ENCODE measurements at regions of chr3 and their contacts with region 1.

Region 1: DNA sequence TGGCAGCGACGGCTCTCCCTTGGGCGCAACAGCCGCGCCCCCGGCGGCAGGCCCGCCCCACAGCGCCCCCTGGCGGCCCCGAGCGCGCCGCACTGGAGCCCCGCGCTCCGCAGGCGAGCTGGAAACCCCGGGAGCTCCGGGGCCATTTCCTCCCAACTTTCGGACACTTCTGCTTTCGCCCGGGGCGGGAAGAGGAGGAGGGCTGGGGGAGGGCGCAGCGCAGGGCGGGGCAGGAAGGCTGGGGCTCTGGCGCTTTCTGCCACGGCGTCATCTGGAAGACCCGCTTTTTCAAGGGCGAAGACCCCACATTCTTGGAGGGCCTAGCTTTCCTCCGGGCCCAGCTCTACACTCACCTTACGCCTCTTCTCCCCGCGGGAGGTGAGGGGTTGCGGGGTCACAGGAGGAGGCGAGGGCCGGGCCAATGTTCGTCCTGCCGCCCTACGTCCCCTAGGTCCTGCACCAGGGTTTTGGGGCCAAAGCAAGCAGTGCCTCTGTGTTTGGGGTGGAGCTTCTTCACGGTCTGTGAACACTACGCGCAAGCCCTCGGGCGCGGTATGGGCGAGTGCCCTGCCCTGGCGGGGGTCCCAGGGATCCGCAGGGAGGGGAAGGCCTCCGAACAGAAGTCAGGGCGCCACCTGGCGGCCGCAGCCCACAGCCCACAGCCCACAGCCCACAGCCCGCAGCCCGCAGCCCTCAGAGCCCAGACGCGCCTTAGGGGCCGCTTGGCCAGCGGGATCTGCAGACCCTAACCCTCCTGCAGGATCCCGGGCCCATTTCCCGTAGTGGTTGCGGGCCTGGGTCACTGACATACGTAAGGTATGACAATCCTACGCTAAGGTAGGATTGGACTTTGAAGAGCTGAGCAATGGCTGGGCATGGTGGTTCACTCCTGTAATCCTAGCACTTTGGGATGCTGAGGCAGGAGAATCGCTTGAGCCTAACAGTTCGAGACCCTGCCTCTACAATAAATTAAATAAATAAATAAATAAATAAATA is 31.1 kb downstream of the FOXL2 start:
- DNase-seq: peak; percentile 68 to 90 (median 75)
- ATAC-seq: peak; percentile 87
- H3K4me3 ChIP-seq: peak overlapping the region; percentile 82
- H3K4me3 Mint-ChIP-seq: peak overlapping the region; percentile 87
- H3K27ac ChIP-seq: no peak overlapping the region
- H3K27ac Mint-ChIP-seq: peak overlapping the region; percentile 47
- H3K4me1 ChIP-seq: peaks cover 18% of the 10 kb centered on the region
- H3K4me1 Mint-ChIP-seq: no peaks in the 10 kb centered on the region
- H3K27me3 ChIP-seq: peaks cover 0 to 4% of the 10 kb centered on the region in 2 experiments
- H3K27me3 Mint-ChIP-seq: peaks cover 5% of the 10 kb centered on the region
- CTCF ChIP-seq: peak; percentile 85

Region 2: DNA sequence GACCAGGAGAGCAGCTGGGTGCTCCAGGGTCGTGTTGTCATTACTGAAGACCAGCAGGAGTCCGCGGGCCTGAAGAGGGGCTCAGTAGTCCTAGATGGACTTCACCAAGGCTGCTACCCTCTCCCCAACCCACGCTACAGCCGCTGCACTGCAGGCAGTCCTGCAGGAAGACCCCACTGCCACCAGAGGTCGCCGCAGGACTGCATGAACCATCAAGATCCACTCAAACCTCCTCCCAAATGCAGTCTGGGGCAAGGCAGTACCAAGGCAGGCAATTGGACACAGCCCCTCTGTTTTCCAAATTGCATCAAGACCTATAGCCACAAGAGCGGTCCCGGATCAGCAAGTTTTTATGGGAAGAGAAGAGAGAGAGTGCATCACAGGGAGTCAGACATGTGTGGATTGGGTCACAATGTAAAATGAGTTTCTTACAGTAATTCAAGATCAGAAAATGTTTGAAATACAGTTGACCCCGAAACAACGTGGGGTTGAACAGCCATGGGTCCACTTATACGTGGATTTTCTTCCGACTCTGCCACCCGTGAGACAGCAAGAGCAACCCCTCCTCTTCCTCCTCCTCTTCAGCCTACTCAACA is 847.1 kb before region 1 on chr3:
- CTCF ChIA-PET with region 1: no interaction called
- POLR2A ChIA-PET with region 1: no interaction called
- intact Hi-C with region 1: loop called (anchors 2 to 5 kb)
- DNase-seq: peak; percentile 53 to 82 (median 64)
- ATAC-seq: peak; percentile 77
- H3K4me3 ChIP-seq: no peak overlapping the region
- H3K4me3 Mint-ChIP-seq: no peak overlapping the region
- H3K27ac ChIP-seq: no peak overlapping the region
- H3K27ac Mint-ChIP-seq: no peak overlapping the region
- H3K4me1 ChIP-seq: no peaks in the 10 kb centered on the region
- H3K4me1 Mint-ChIP-seq: no peaks in the 10 kb centered on the region
- H3K27me3 ChIP-seq: no peaks in the 10 kb centered on the region
- H3K27me3 Mint-ChIP-seq: peaks cover 12% of the 10 kb centered on the region
- CTCF ChIP-seq: peak; percentile 79

Region 3: DNA sequence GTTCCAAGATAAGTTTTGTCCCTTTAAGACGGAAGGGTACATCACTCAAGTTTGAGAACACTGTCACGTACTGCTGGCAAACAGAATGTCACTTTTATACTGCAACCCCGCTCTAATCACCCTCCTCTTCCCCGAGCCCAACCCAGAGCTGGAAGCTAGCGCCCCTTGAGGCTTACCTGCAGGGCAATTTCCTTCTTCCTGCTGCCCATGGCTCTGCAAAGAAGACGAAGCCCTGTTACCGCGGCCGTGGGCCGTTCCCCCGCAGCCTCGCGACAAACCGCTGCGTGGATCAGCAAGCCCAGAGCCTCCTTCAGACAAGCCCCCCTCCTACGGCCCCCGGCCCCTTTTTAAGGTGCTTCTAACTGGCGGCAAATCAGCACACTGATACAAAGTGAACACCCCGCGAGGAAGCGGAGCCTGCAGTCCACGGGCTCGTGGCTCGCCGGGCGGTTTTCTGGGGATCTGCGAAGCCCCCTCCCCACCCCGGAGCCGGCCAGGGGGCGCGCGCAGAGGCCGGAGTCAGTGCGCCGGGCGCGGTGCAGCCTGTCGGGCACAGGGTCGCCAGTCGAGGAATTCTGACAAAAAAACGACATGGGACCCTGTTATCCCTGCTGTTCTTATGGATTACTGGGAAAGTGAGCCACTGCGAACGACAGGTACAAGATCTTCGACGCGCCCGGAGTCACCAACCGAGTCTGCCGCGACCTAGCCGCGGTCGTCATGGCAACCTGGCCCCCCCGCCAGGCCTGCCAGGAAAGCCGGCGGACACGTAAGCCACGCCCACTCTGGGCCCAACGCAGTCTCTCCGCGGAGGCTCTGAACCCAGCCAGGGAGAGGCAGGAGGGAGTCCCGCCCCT is 586.4 kb before region 1 on chr3 and contains the start of gene NME9:
- CTCF ChIA-PET with region 1: interaction called, 3 read pairs
- POLR2A ChIA-PET with region 1: no interaction called
- intact Hi-C with region 1: loop called (anchors 5 to 10 kb)
- DNase-seq: peak; percentile 80 to 97 (median 90)
- ATAC-seq: peak; percentile 85
- H3K4me3 ChIP-seq: peak within 1 kb of the TSS; percentile 69
- H3K4me3 Mint-ChIP-seq: peak within 1 kb of the TSS; percentile 98
- H3K27ac ChIP-seq: peak within 1 kb of the TSS; percentile 49 to 81
- H3K27ac Mint-ChIP-seq: peak within 1 kb of the TSS; percentile 88
- H3K4me1 ChIP-seq: peaks cover 20% of the 10 kb centered on the region
- H3K4me1 Mint-ChIP-seq: peaks cover 37% of the 10 kb centered on the region
- H3K27me3 ChIP-seq: no peaks in the 10 kb centered on the region
- H3K27me3 Mint-ChIP-seq: no peaks in the 10 kb centered on the region
- CTCF ChIP-seq: peak; percentile 71
- total RNA-seq, gene NME9: 0.80 TPM in 1 of 2 experiments, not detected in the other

Region 4: DNA sequence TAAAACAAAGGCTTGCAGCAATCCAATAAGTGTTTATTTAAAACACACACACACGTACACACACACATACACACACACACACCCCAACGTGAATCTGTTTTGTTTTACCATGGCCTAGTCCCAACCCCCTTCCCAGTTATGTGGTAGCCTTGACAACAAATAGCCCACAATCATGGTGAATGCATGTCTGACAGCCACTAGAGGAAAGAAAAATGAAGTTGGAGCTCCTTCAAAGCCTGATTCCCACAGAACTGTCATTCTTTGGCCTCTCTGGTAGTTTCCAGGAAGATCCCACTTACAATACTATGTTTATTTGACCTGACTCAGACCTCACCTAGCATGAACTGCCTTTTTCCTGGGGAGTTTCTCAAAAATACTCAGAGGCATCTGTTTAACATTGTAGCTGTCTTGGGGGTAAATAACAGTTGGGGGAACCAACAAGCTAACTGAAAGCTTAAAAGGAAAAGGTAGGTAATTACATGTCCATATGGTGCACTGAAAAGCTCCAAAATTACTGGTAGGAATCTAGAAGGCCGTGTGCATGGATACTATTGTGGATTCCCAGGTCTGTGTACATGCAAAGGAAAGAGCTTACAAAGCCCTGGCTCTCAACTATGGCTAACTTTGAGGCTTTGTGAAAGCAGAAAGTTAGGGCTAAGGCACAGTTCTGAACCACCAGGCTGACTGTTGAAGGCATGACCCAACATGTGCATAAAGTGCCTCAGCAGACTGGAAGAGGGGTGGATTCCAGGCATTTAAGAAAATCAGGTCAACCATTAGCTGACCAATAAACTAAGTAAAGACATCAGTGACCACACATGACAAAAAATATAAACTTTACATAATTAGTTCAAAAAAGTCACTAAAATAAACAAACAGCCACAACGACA is 241.9 kb before region 1 on chr3:
- CTCF ChIA-PET with region 1: no interaction called
- POLR2A ChIA-PET with region 1: no interaction called
- intact Hi-C with region 1: no loop called
- DNase-seq: no peak
- ATAC-seq: no peak
- H3K4me3 ChIP-seq: no peak overlapping the region
- H3K4me3 Mint-ChIP-seq: no peak overlapping the region
- H3K27ac ChIP-seq: no peak overlapping the region
- H3K27ac Mint-ChIP-seq: no peak overlapping the region
- H3K4me1 ChIP-seq: no peaks in the 10 kb centered on the region
- H3K4me1 Mint-ChIP-seq: no peaks in the 10 kb centered on the region
- H3K27me3 ChIP-seq: no peaks in the 10 kb centered on the region
- H3K27me3 Mint-ChIP-seq: no peaks in the 10 kb centered on the region
- CTCF ChIP-seq: no peak

Region 5: GRCh38 chr3:138694287-138695007 is 221.4 kb before region 1 on chr3:
- CTCF ChIA-PET with region 1: interaction called, 121 read pairs
- POLR2A ChIA-PET with region 1: interaction called, 5 read pairs
- intact Hi-C with region 1: loop called (anchors 1 kb)
- DNase-seq: no peak
- ATAC-seq: no peak
- H3K4me3 ChIP-seq: no peak overlapping the region
- H3K4me3 Mint-ChIP-seq: no peak overlapping the region
- H3K27ac ChIP-seq: no peak overlapping the region
- H3K27ac Mint-ChIP-seq: no peak overlapping the region
- H3K4me1 ChIP-seq: no peaks in the 10 kb centered on the region
- H3K4me1 Mint-ChIP-seq: no peaks in the 10 kb centered on the region
- H3K27me3 ChIP-seq: no peaks in the 10 kb centered on the region
- H3K27me3 Mint-ChIP-seq: no peaks in the 10 kb centered on the region
- CTCF ChIP-seq: no peak

Region 6: DNA sequence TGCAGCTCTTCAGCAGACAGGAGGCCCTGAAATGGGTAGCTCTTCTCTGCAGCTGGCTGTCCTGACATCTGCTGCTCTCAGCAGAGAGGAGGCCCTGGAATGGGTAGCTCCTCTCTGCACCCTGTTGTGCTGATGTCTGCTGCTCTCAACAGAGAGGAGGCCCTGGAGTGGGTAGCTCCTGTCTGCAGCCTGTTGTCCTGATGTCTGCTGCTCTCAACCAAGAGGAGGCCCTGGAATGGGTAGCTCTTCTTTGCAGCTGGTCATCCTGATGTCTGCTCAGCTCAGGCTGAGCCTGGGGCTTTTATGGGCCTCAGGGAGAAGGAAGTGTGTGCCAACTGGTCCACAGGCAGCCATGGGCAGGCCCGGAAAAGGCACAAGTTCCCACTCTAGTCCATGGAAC is 147.7 kb before region 1 on chr3:
- CTCF ChIA-PET with region 1: no interaction called
- POLR2A ChIA-PET with region 1: no interaction called
- intact Hi-C with region 1: no loop called
- DNase-seq: no peak
- ATAC-seq: no peak
- H3K4me3 ChIP-seq: no peak overlapping the region
- H3K4me3 Mint-ChIP-seq: no peak overlapping the region
- H3K27ac ChIP-seq: no peak overlapping the region
- H3K27ac Mint-ChIP-seq: no peak overlapping the region
- H3K4me1 ChIP-seq: peaks cover 4% of the 10 kb centered on the region
- H3K4me1 Mint-ChIP-seq: peaks cover 25% of the 10 kb centered on the region
- H3K27me3 ChIP-seq: no peaks in the 10 kb centered on the region
- H3K27me3 Mint-ChIP-seq: no peaks in the 10 kb centered on the region
- CTCF ChIP-seq: no peak

Region 7: GRCh38 chr3:138935848-138936740 is 20.3 kb after region 1 on chr3:
- CTCF ChIA-PET with region 1: interaction called, 13 read pairs
- POLR2A ChIA-PET with region 1: interaction called, 6 read pairs
- intact Hi-C with region 1: no loop called
- DNase-seq: peak; percentile 44 to 83 (median 63)
- ATAC-seq: peak; percentile 82
- H3K4me3 ChIP-seq: peak overlapping the region; percentile 43
- H3K4me3 Mint-ChIP-seq: peak overlapping the region; percentile 80
- H3K27ac ChIP-seq: no peak overlapping the region
- H3K27ac Mint-ChIP-seq: no peak overlapping the region
- H3K4me1 ChIP-seq: peaks cover 47% of the 10 kb centered on the region
- H3K4me1 Mint-ChIP-seq: peaks cover 40% of the 10 kb centered on the region
- H3K27me3 ChIP-seq: peaks cover 75 to 80% of the 10 kb centered on the region in 2 experiments
- H3K27me3 Mint-ChIP-seq: peaks cover 92% of the 10 kb centered on the region
- CTCF ChIP-seq: peak; percentile 95

Measured in CD4-positive, alpha-beta T cell (primary cell).